ENCODE measurements at regions of chr12 and their contacts with region 1.

Region 1: DNA sequence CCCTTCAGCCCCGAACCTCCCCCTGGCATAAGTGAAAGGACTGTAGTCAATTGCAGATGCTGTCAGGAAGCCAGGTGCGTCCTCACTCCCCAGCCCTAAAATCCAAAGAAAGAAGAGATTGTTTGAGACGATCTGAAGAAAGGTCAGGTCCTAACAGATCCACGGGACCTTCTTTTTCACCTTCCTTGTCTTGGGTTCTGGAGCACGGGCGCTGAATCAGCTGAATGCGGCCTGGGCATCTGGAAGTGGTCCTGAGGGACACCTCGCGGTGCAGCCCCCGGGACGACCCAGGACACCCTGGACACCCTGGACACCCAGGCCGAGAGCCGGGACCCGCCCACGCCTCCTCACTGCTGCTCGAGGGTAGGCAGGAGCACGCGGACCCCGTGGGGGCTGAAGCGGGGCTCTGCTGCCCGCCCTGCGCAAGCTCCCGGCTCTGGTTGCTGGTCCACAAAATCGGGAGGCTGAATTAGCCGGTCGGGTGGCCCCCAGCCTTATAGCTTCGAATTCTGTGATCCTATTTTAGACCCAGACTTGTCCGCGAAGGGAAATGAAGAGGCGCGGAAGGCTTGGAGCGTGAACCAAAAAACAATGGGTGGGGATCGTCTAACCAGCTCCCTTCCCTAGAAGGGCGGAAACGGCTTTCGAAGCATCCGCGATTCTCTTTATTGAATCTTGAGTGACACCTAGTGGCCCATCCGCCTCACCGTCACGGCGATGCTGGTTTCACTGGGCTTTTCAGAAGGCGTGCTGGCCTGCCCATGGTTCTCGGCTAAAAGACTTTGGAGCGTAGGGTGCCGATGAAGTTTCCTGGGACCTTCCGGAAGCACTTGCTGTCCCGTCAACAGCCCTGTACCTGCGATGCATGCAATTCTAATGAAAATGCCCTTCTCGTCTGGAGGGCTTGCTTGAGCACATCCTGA is 46.4 kb upstream of the PLXNC1 start:
- DNase-seq: peak; percentile 82 to 89
- H3K4me3 ChIP-seq: peak overlapping the region; percentile 14 to 68 (median 53)
- H3K27ac ChIP-seq: no peak overlapping the region
- H3K4me1 ChIP-seq: peaks cover 0 to 4% (median 1%) of the 10 kb centered on the region in 4 experiments; a peak in 4 of 7 replicates
- H3K27me3 ChIP-seq: peaks cover 0 to 12% (median 8%) of the 10 kb centered on the region in 4 experiments; a peak in 5 of 7 replicates
- CTCF ChIP-seq: peak; percentile 80 to 90 (median 88)
- EP300 ChIP-seq: no peak
- POLR2A ChIP-seq: no peak
- RAD21 ChIP-seq: peak; percentile 91 to 96

Region 2: GRCh38 chr12:93502802-93503623 is 599.0 kb before region 1 on chr12:
- CTCF ChIA-PET with region 1: interaction called, 85 read pairs
- POLR2A ChIA-PET with region 1: interaction called, 6 read pairs
- DNase-seq: peak; percentile 9 to 61
- H3K4me3 ChIP-seq: no peak overlapping the region
- H3K27ac ChIP-seq: no peak overlapping the region
- H3K4me1 ChIP-seq: no peaks in the 10 kb centered on the region
- H3K27me3 ChIP-seq: no peaks in the 10 kb centered on the region
- CTCF ChIP-seq: peak in 2 of 3 experiments; percentile 55 to 57; a peak in 3 of 4 replicates
- EP300 ChIP-seq: no peak
- POLR2A ChIP-seq: no peak
- RAD21 ChIP-seq: peak; percentile 78 to 80

Region 3: DNA sequence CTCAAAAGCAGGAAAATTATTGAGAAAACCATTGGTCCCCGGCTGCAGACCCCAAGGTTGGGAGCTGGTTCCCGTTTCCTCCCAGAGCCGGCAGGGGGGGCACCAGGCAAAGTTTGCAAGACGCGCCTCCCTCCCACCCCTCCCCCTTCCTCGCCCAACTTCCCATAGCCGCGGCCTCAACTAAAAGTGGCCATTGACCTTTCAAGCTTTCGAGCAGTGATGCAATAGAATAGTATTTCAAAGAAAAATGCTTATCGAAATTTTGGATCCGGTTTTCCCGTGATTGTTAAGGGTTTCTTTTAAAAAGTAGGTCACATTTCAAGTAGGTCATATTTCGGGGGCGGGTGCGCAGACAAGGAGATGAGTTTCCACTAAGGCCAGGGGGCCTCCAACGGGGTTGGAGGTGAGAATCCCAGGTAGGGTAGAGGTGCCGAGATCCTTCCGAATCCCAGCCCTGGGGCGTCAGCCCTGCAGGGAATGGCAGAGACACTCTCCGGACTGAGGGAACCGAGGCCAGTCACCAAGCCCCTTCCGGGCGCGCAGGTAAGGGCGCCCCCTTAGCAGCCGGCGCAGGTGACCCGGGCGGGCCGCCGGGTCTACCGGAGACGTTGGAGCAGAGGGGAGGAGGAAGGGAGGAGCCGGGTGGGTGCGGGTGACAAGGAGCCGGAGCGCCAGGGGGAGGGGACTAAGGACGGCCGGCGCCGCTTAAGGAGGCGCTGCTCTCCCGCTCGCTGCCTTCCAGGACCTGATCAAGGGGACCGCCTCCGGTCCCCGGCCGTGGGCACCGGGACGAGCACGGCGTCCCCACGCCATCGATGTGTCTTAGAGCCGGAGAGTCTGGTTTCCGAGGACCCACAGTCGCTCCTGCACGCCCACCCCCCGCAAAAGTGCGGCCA is 532.1 kb before region 1 on chr12:
- CTCF ChIA-PET with region 1: interaction called, 51 read pairs
- POLR2A ChIA-PET with region 1: interaction called, 5 read pairs
- DNase-seq: peak in 1 of 2 experiments; percentile 91
- H3K4me3 ChIP-seq: peak overlapping the region; percentile 68 to 82 (median 74)
- H3K27ac ChIP-seq: no peak overlapping the region
- H3K4me1 ChIP-seq: peaks cover 0 to 2% (median 0%) of the 10 kb centered on the region in 4 experiments; a peak in 5 of 7 replicates
- H3K27me3 ChIP-seq: peaks cover 0 to 30% (median 18%) of the 10 kb centered on the region in 4 experiments; a peak in 5 of 7 replicates
- CTCF ChIP-seq: peak; percentile 63 to 84 (median 70)
- EP300 ChIP-seq: no peak
- POLR2A ChIP-seq: no peak; a peak in 1 of 3 replicates
- RAD21 ChIP-seq: peak; percentile 87 to 91

Region 4: DNA sequence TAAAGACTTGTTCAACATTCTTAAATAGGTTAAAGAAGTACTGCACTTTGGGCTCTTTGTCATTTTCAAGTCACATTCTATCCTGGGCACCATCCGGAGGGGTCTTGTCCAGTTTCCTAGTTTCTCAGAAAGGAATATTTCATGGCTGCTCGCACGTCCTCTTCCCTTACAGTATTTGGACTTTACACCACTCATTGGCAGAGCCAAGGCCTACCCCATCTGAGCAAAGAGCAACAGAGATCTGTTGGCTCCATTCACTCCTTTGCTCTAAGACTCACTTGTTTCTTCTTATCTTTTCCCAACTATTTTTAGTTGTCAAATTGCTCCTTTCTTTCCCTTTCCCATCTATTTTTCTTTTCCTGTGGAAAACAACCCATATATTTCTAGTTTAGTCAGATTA is 306.6 kb before region 1 on chr12:
- CTCF ChIA-PET with region 1: interaction called, 12 read pairs
- POLR2A ChIA-PET with region 1: no interaction called
- DNase-seq: no peak
- H3K4me3 ChIP-seq: no peak overlapping the region
- H3K27ac ChIP-seq: no peak overlapping the region
- H3K4me1 ChIP-seq: peaks cover 0 to 4% (median 2%) of the 10 kb centered on the region in 4 experiments; a peak in 3 of 7 replicates
- H3K27me3 ChIP-seq: no peaks in the 10 kb centered on the region
- CTCF ChIP-seq: no peak
- EP300 ChIP-seq: no peak
- POLR2A ChIP-seq: no peak
- RAD21 ChIP-seq: no peak

Region 5: DNA sequence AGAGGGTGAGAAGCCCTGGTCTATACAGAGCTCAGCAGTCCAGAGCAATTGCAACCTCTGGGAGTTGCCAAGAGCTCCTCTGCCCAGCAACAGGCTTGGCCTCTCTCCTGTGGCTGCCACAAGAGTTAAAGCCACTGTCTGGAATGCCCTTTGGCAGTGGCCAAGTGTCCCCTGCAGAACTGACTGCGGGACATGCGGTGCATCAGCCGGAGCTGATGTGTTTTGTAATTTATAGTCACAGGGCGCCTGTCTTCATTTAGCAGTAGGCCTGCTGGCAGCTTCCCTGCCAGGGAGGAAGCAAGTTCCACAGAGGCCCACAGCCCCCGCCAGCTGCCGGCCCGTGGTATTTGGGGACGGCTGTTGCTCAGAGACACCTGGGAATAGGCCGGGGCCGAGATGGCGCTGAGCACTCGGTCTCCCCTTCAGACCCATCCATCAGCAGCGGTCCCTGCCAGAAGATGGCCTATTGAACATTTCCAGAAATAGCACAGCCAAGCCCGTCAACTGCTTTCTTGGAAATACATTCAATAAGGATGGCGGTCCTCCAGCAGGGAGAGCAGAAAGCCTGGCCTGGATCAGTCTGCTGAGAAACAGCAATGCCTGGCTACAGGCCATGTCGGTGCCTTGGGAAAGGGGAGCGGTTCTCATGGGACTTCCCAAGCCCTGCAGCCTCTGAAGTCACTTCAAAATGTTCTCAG is 207.5 kb before region 1 on chr12:
- CTCF ChIA-PET with region 1: interaction called, 42 read pairs
- POLR2A ChIA-PET with region 1: interaction called, 3 read pairs
- DNase-seq: peak in 1 of 2 experiments; percentile 37
- H3K4me3 ChIP-seq: no peak overlapping the region
- H3K27ac ChIP-seq: no peak overlapping the region
- H3K4me1 ChIP-seq: peaks cover 0 to 3% (median 1%) of the 10 kb centered on the region in 4 experiments; a peak in 2 of 7 replicates
- H3K27me3 ChIP-seq: no peaks in the 10 kb centered on the region
- CTCF ChIP-seq: no peak
- EP300 ChIP-seq: no peak
- POLR2A ChIP-seq: no peak
- RAD21 ChIP-seq: no peak

Region 6: DNA sequence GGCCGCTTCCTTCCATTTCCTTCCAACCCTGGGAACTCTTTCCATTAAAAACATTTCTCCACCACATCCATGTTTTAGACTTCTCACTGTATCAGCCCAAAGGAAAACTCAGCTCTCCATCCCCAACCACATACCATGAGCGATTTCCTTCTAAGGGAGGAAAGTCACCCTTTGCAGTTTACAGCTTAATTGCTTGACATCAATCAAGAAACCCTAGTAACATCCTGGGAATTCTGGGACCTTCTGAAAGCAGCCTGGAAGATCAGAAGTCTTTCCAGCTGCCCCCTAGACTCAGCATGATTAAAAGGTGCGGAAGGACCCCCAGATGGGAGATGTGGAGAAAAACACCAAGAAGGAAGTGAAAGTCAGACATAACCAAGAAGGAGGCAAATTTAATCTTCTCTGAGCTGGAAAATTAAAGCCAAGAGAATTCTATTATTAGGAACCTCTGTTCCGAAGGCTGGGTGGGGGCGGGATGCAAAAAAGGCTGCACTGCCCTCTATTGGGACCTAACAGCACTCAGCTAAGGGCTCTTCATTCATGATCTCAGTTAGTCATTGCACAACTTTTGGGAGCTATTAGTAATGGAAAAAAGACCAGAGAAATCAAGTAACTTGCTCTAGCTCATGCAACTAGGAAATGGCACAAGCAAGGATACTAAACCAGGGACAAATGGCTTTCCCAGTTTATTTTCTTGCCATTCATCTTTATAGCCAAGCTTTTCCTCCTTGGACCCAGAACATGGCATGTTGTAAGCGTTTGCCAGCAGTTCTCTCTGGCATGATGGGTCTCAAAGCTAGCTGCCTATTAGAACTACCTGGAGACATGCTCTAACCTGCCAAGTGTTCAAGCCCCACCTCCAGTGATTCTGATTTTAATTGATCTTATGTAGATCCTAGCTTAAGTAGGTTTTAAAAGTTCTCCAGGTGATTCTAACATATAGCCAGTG is 26.7 kb before region 1 on chr12:
- CTCF ChIA-PET with region 1: interaction called, 152 read pairs
- POLR2A ChIA-PET with region 1: no interaction called
- DNase-seq: no peak
- H3K4me3 ChIP-seq: no peak overlapping the region
- H3K27ac ChIP-seq: no peak overlapping the region
- H3K4me1 ChIP-seq: peaks cover 0 to 3% (median 0%) of the 10 kb centered on the region in 4 experiments; a peak in 1 of 7 replicates
- H3K27me3 ChIP-seq: no peaks in the 10 kb centered on the region
- CTCF ChIP-seq: peak; percentile 51 to 72 (median 64)
- EP300 ChIP-seq: no peak
- POLR2A ChIP-seq: no peak
- RAD21 ChIP-seq: peak; percentile 82 to 83

Region 7: GRCh38 chr12:94282675-94283074 is 180.7 kb after region 1 on chr12:
- CTCF ChIA-PET with region 1: no interaction called
- POLR2A ChIA-PET with region 1: no interaction called
- DNase-seq: no peak
- H3K4me3 ChIP-seq: no peak overlapping the region
- H3K27ac ChIP-seq: no peak overlapping the region
- H3K4me1 ChIP-seq: peaks cover 0 to 9% (median 7%) of the 10 kb centered on the region in 4 experiments; a peak in 6 of 7 replicates
- H3K27me3 ChIP-seq: no peaks in the 10 kb centered on the region
- CTCF ChIP-seq: no peak
- EP300 ChIP-seq: no peak
- POLR2A ChIP-seq: no peak
- RAD21 ChIP-seq: no peak

Region 8: DNA sequence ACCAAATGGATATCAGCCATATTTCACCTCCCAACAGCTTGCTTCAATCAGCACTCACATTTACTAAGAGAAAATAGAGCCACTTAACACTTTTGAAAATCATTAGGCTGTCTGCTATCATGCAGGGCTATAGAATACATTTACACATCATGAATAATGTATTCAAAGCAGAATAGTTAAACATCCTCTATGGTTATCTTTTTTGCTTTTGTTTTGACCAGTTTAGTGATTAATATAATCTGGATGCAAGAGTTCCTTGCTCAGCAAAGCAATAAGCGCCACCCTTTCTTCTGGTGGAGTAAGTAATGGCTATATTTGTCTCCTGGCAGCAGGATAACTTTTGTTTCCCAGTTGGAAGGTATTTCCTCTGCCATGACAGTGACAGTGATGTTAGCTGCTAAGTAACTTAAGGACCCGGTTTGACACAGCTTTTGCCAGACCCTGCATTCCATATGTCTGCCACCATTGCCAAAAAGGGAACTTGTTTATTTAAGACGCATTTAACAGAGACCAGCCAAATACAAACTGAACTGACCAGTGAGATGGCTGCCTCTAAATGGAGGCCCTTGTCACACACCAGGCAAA is 1041.7 kb after region 1 on chr12:
- CTCF ChIA-PET with region 1: no interaction called
- POLR2A ChIA-PET with region 1: no interaction called
- DNase-seq: no peak
- H3K4me3 ChIP-seq: no peak overlapping the region
- H3K27ac ChIP-seq: no peak overlapping the region
- H3K4me1 ChIP-seq: peaks cover 0 to 9% (median 8%) of the 10 kb centered on the region in 4 experiments; a peak in 3 of 7 replicates
- H3K27me3 ChIP-seq: no peaks in the 10 kb centered on the region
- CTCF ChIP-seq: no peak
- EP300 ChIP-seq: no peak
- POLR2A ChIP-seq: no peak
- RAD21 ChIP-seq: no peak

Measured in H1 (cell line).